HepG2 (cell line): ENCODE measurements at regions of chr1 and their contacts with region 1.

Region 1: GRCh38 chr1:243312952-243313634 is 57.3 kb downstream of the SDCCAG8 start:
- DNase-seq: no peak
- ATAC-seq: no peak
- H3K4me3 ChIP-seq: no peak overlapping the region
- H3K27ac ChIP-seq: no peak overlapping the region
- H3K4me1 ChIP-seq: no peaks in the 10 kb centered on the region
- H3K27me3 ChIP-seq: no peaks in the 10 kb centered on the region
- CTCF ChIP-seq: no peak
- EP300 ChIP-seq: no peak
- POLR2A ChIP-seq: no peak
- RAD21 ChIP-seq: no peak

Region 2: DNA sequence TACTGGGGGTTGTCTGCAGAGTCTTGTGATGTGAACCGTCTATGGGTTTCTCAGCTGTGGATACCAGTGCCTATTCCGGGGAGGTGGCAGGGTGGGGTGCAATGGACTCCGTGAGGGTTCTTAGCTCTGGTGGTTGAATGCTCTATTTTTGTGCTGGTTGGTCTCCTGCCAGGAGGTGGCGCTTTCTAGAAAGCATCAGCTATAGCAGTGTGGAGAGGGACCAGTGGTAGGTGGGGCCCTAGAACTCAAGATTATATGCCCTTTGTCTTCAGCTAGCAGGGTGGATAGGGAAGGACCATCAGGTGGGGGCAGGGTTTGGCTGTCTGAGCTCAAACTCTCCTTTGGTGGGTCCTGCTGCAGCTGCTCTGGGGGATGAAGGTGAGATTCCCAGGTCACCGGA is 661.3 kb before region 1 on chr1:
- CTCF ChIA-PET with region 1: no interaction called
- POLR2A ChIA-PET with region 1: no interaction called
- in situ Hi-C with region 1: loop called (anchors 25 kb)
- intact Hi-C with region 1: no loop called
- DNase-seq: peak; percentile 4
- ATAC-seq: peak; percentile 63
- H3K4me3 ChIP-seq: no peak overlapping the region
- H3K27ac ChIP-seq: no peak overlapping the region
- H3K4me1 ChIP-seq: no peaks in the 10 kb centered on the region
- H3K27me3 ChIP-seq: no peaks in the 10 kb centered on the region
- CTCF ChIP-seq: peak; percentile 48
- EP300 ChIP-seq: no peak
- POLR2A ChIP-seq: no peak
- RAD21 ChIP-seq: no peak

Region 3: GRCh38 chr1:242847390-242847993 is 465.6 kb before region 1 on chr1:
- CTCF ChIA-PET with region 1: no interaction called
- POLR2A ChIA-PET with region 1: no interaction called
- in situ Hi-C with region 1: loop called (anchors 25 kb)
- intact Hi-C with region 1: no loop called
- DNase-seq: no peak
- ATAC-seq: no peak
- H3K4me3 ChIP-seq: no peak overlapping the region
- H3K27ac ChIP-seq: no peak overlapping the region
- H3K4me1 ChIP-seq: no peaks in the 10 kb centered on the region
- H3K27me3 ChIP-seq: no peaks in the 10 kb centered on the region
- CTCF ChIP-seq: no peak
- EP300 ChIP-seq: no peak
- POLR2A ChIP-seq: no peak
- RAD21 ChIP-seq: no peak